Right ventricle myocardium inferior (tissue), 1 donor: ENCODE measurements at regions of chr11 and their contacts with region 1.

Region 1: GRCh38 chr11:71086675-71087258 is 165.6 kb downstream of the SHANK2 start:
- DNase-seq: no peak
- ATAC-seq: peak; percentile 23

Region 2: GRCh38 chr11:70608568-70609470 is 477.9 kb before region 1 on chr11:
- intact Hi-C with region 1: no loop called
- DNase-seq: no peak
- ATAC-seq: no peak

Region 3: GRCh38 chr11:71420455-71421241 is 333.9 kb after region 1 on chr11:
- intact Hi-C with region 1: loop called (anchors 2 kb)
- DNase-seq: no peak
- ATAC-seq: peak; percentile 56